ENCODE measurements at regions of chr2 and their contacts with region 1.

Region 1: DNA sequence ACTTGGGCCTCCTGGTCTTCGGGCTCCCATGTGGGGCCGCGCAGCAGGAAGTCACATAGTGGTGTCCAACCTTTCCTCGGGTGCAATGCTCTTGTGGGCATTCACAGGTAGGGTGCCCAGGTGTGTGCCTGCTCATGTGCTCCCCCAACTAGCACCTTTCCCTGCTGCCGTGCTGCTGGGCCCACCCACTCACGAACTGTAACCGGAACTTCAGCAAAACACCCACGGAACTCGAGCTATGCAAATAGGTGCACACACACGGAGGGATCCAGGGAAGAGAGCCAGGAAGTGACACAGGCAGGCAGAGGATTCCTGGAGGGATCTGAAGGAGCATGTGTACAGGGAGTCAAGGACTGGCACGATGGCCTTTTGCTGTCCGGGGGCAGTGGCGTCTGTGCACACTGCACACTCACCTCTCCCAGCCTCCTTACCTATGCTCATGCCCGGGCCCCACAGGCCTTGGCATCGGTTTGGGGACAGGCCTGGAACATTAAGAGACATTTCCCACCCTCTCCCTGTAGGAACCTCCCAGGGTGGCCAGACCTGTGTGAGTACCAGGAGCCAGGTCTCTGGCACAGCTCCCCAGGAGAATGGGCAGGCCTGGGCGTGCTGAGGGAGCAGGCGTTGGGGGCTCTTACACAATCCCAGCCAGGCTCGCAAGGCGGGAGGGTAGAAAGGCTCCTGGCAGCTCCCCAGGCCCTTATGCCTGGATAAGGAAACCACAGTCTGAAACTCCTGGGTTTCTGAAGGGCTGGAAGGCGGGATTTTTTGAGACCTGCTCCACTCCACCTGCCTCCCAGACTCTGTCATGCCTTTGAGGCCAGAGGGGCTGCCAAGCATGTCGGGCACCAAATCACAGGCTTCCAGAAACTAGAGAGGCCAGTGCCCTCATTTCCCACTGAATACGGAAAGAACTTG is 6.6 kb upstream of the PTMA start:
- DNase-seq: peak in 1 of 2 experiments; percentile 66
- H3K4me3 ChIP-seq: no peak overlapping the region
- H3K27ac ChIP-seq: no peak overlapping the region
- H3K4me1 ChIP-seq: peaks cover 12% of the 10 kb centered on the region
- H3K27me3 ChIP-seq: no peaks in the 10 kb centered on the region
- CTCF ChIP-seq: no peak

Region 2: DNA sequence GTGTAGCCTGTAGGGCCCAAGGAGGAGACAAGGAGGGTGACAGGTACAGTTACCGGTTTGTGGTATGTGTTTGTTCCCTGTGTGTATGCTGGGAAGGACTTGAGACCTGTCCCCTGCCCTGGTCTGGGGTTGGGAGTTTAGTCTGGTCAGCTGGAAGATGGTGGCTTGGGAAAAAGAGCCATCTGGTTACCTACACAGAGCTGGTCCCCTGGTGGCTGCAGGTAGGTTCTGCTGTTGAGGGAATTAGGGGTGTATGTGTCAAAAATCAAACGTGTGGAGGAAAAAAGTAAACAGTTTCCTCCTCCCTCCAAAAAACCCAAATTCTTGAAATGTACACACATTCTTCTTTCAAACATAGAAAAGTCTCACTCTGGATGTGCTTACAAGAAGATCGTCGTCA is 30.9 kb after region 1 on chr2:
- CTCF ChIA-PET with region 1: interaction called, 22 read pairs
- POLR2A ChIA-PET with region 1: no interaction called
- intact Hi-C with region 1: no loop called
- DNase-seq: no peak
- H3K4me3 ChIP-seq: no peak overlapping the region
- H3K27ac ChIP-seq: no peak overlapping the region
- H3K4me1 ChIP-seq: no peaks in the 10 kb centered on the region
- H3K27me3 ChIP-seq: no peaks in the 10 kb centered on the region
- CTCF ChIP-seq: 0 out of 2 replicates have a peak, but pooled peaks have one; percentile 16